ENCODE measurements at regions of chr12 and their contacts with region 1.

Region 1: DNA sequence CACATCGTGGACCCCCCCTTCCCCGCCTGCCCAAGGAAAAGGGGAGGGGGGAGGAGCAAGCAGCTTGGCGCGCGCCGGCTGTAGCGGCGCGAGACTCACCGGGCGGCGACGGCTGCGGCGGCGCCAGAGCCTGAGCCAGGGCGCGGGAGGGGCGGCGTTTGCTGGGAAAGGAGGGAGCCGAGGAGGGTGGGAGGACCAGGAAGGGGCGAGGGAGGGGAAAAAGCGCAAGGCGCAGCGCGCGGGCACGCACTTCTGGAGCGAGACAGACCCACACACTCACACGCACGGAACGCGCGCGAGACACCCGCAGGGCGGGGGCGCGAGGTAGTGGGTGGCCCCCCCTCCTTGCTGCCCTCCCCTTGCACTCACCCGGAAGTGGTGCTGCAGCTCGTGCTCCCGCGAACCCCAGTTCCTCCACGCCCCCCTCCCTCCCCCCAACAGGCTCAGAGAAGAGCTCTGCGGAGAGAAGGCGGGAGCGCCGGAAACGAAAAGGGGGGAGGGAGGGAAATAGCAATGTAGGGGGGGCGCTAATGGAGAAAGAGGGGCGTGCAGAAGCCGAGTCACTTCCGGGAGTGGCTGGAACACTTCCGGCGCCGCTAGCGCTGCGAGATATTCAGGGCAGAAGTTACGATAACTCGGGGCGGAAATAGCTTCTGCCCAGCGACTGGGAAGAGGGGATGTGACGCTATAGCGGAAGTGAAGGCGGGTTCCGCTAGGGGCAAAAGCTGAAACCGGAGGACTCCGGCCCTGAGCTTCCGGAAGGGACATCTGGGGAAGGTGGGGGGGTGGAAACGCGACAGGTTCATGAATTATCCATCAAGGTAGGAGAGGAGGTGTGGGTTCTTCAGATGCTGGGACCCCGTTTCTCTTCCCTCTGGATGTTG is at the start of gene ZNF384:
- DNase-seq: peak; percentile 97
- H3K4me3 Mint-ChIP-seq: peak within 1 kb of the TSS; percentile 92
- H3K27ac Mint-ChIP-seq: peak within 1 kb of the TSS; percentile 95
- H3K4me1 Mint-ChIP-seq: peaks cover 52% of the 10 kb centered on the region
- H3K27me3 Mint-ChIP-seq: no peaks in the 10 kb centered on the region
- total RNA-seq, gene ZNF384: 52.6 to 56.6 TPM

Region 2: DNA sequence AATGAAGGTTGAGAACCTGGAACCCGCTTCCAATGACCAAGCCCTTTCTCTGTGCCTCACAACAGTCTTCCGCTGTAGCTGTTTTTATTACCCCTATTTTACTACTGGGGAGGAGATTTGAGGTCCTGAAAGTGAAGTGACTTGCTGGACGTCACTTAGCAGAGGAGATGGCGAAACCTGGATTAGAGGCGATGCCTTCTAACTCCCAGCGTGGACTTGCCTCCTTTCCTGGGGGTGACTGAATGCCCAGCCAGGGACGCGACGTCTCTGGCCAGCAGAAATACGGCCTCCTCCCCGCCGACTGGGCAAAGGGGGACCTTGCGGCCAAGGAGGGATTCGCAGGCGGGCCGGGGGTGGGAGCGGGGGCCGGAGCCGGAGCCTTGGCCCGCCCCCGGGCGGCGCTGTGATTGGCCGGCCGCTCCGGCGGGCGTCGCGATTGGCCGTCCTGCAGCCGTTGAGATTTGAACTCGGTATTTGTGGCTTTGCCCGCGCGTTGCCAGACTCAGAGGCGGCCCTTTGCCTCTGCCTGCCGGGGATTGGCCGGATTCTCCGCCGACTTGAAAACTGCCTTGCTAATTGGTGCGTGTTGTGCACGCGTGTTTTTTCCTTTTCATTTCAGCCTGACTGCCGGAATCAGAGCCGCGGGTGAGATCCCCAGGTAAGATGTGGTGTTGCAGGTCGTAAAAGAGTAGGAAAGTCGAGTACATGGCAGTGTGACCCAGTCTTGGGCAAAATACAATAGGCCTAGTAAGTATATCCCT is 195.6 kb before region 1 on chr12 and contains the start of gene NCAPD2:
- CTCF ChIA-PET with region 1: no interaction called
- intact Hi-C with region 1: loop called (anchors 1 kb)
- DNase-seq: peak; percentile 98
- H3K4me3 Mint-ChIP-seq: peak within 1 kb of the TSS; percentile 98
- H3K27ac Mint-ChIP-seq: peak within 1 kb of the TSS; percentile 99
- H3K4me1 Mint-ChIP-seq: peaks cover 33% of the 10 kb centered on the region
- H3K27me3 Mint-ChIP-seq: no peaks in the 10 kb centered on the region
- total RNA-seq, gene NCAPD2: 252 to 261 TPM

Region 3: GRCh38 chr12:6607751-6608591 is 81.3 kb before region 1 on chr12:
- CTCF ChIA-PET with region 1: interaction called, 11 read pairs
- intact Hi-C with region 1: loop called (anchors 1 kb)
- DNase-seq: peak; percentile 79
- H3K4me3 Mint-ChIP-seq: no peak overlapping the region
- H3K27ac Mint-ChIP-seq: no peak overlapping the region
- H3K4me1 Mint-ChIP-seq: peaks cover 55% of the 10 kb centered on the region
- H3K27me3 Mint-ChIP-seq: no peaks in the 10 kb centered on the region

Region 4: GRCh38 chr12:6632026-6632983 is 56.9 kb before region 1 on chr12:
- CTCF ChIA-PET with region 1: interaction called, 3 read pairs
- intact Hi-C with region 1: loop called (anchors 1 kb)
- DNase-seq: peak; percentile 77
- H3K4me3 Mint-ChIP-seq: peak overlapping the region; percentile 74
- H3K27ac Mint-ChIP-seq: peak overlapping the region; percentile 97
- H3K4me1 Mint-ChIP-seq: peaks cover 62% of the 10 kb centered on the region
- H3K27me3 Mint-ChIP-seq: no peaks in the 10 kb centered on the region

Region 5: GRCh38 chr12:6723607-6724396 is 34.6 kb after region 1 on chr12 and contains the start of gene COPS7A:
- CTCF ChIA-PET with region 1: interaction called, 19 read pairs
- intact Hi-C with region 1: loop called (anchors 1 kb)
- DNase-seq: peak; percentile 98
- H3K4me3 Mint-ChIP-seq: peak within 1 kb of the TSS; percentile 91
- H3K27ac Mint-ChIP-seq: peak within 1 kb of the TSS; percentile 89
- H3K4me1 Mint-ChIP-seq: peaks cover 25% of the 10 kb centered on the region
- H3K27me3 Mint-ChIP-seq: no peaks in the 10 kb centered on the region
- total RNA-seq, gene COPS7A: 43.0 to 47.8 TPM

Region 6: GRCh38 chr12:6833189-6833890 is 144.1 kb after region 1 on chr12:
- CTCF ChIA-PET with region 1: interaction called, 11 read pairs
- intact Hi-C with region 1: loop called (anchors 2 kb)
- DNase-seq: no peak
- H3K4me3 Mint-ChIP-seq: no peak overlapping the region
- H3K27ac Mint-ChIP-seq: no peak overlapping the region
- H3K4me1 Mint-ChIP-seq: peaks cover 10% of the 10 kb centered on the region
- H3K27me3 Mint-ChIP-seq: no peaks in the 10 kb centered on the region

Measured in activated naive CD4-positive, alpha-beta T cell treated with anti-CD3 and anti-CD28 coated beads for 36 hours (primary cell).